Activated CD4-positive, alpha-beta T cell treated with anti-CD3 and anti-CD28 coated beads for 36 hours (primary cell): ENCODE measurements at regions of chr5 and their contacts with region 1.

Region 1: GRCh38 chr5:58794875-58795274 is 212.0 kb downstream of the RAB3C start:
- DNase-seq: peak; percentile 81
- ATAC-seq: peak; percentile 92
- H3K4me3 Mint-ChIP-seq: no peak overlapping the region
- H3K27ac Mint-ChIP-seq: no peak overlapping the region
- H3K4me1 Mint-ChIP-seq: peaks cover 18% of the 10 kb centered on the region
- H3K27me3 Mint-ChIP-seq: peaks cover 29% of the 10 kb centered on the region

Region 2: DNA sequence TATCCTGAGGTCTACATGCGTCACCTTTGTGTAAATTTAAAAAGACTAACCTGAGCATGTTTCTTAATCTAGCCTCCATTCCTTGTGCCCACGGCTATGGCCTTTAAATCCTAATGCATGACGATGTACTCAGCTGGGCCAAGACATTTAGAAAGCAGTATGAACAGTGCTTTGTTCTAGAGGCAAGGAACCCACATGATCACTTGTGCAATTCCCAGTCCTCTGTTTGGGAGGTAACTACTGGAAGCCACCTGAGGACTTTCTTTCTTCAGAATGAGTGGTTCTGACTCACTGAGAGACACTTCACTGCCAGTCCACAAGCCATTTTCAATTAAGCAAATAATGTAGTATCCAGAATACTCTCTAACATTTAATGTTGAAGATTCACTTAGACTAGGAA is 30.7 kb before region 1 on chr5:
- CTCF ChIA-PET with region 1: no interaction called
- POLR2A ChIA-PET with region 1: no interaction called
- intact Hi-C with region 1: loop called in 1 of 2 experiments (anchors 2 kb)
- DNase-seq: no peak
- ATAC-seq: peak; percentile 24
- H3K4me3 Mint-ChIP-seq: no peak overlapping the region
- H3K27ac Mint-ChIP-seq: no peak overlapping the region
- H3K4me1 Mint-ChIP-seq: peaks cover 42% of the 10 kb centered on the region
- H3K27me3 Mint-ChIP-seq: no peaks in the 10 kb centered on the region

Region 3: DNA sequence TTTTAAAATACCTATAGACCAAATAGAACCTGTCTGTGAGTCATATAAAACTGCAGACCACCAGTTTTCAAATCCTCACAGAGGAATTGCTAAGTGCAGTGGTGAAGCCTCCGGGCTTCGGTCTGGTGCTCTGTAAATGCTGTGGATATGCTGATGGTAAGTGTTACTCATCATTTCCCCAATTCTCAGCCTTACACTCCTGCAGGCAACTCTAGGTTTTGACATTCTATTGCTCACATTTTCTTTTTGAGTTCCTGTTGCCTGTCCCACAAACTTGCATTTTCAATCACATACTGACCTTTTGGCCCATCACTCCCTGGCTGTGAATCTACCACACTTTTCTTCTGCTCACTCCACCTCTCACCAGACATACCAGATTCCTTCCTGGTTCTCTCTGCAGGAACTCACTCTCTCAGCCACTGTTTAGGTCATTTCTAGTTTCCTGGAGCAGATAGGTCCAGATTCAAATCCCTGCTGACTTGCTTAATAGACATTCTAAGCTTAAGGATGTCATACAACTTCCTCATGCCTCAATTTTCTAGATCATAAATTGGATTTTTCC is 19.1 kb before region 1 on chr5:
- CTCF ChIA-PET with region 1: interaction called, 3 read pairs
- POLR2A ChIA-PET with region 1: no interaction called
- intact Hi-C with region 1: loop called (anchors 1 kb)
- DNase-seq: peak; percentile 46
- ATAC-seq: peak; percentile 92
- H3K4me3 Mint-ChIP-seq: no peak overlapping the region
- H3K27ac Mint-ChIP-seq: no peak overlapping the region
- H3K4me1 Mint-ChIP-seq: peaks cover 19% of the 10 kb centered on the region
- H3K27me3 Mint-ChIP-seq: peaks cover 34% of the 10 kb centered on the region